Aorta (tissue), 5 donors: ENCODE measurements at regions of chr17 and their contacts with region 1.

Region 1: GRCh38 chr17:61981323-61981722 is 53.5 kb upstream of the INTS2 start:
- DNase-seq: no peak
- ATAC-seq: no peak
- H3K4me3 ChIP-seq: no peak overlapping the region
- H3K27ac ChIP-seq: no peak overlapping the region
- H3K4me1 ChIP-seq: peaks cover 0 to 2% of the 10 kb centered on the region in 2 donors
- H3K27me3 ChIP-seq: no peaks in the 10 kb centered on the region

Region 2: DNA sequence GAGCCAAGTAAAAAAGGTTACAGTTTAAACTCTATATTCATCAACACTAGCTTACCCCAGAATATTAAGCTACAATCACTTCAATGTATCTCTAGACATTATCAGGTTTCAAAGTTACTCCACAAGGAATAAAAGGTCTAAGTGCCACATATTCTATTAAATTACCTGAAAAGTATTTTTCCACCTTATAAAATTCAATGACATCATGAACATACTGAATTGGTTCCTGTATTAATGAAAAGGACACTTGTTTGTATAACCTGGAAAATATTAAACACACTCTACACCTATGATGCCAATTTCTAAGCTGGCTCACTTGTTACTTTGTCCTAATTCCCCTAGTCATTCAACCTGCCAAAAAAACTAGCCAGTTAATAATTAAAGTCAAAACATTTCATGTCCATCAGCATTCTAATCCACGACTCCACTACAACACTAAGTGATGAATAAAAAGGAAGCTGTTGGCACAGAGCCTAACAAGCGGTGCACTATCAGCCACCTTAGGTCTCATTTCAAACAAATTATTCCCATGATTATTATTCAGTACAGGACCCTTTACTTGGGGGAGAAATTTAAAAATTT is 71.5 kb after region 1 on chr17:
- intact Hi-C with region 1: loop called in 1 of 2 experiments (anchors 10 kb)
- DNase-seq: no peak
- ATAC-seq: no peak
- H3K4me3 ChIP-seq: no peak overlapping the region
- H3K27ac ChIP-seq: no peak overlapping the region
- H3K4me1 ChIP-seq: peaks cover 0 to 6% of the 10 kb centered on the region in 2 donors
- H3K27me3 ChIP-seq: no peaks in the 10 kb centered on the region